Right ventricle myocardium inferior (tissue), 1 donor: ENCODE measurements at regions of chr5 and their contacts with region 1.

Region 1: DNA sequence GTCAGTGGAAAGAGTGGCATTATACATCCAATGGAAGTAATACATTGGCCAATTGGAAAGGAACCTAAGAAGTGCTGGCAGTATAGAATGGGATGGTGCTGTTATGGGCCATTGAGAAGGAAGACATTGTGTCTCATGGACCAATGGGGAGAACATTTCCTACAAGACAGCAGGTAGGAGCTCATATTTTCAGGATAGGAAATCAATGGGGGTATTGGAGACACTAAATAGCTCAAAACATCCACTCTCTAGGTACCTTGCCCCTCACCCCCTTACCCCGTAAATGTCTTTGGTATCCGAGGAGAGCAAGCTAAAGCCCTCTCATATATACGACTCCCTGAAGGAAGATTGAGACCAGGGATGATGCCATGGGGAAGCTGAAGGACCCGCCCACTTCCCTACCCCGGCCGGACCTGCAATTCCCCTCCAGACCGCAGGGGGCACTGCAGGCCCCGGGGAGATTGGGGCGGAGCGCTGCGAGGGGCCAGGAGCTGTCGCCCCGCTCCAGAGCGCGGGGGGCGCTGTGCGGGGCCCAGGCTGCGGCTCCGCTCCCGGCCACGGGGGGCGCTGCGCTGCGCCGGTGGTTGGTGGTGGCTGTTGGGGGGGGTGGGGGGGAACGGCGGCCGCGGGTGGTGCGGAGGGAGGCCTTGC is at the start of gene KDM3B:
- DNase-seq: peak; percentile 93
- ATAC-seq: peak; percentile 80
- total RNA-seq, gene KDM3B: 36.3 TPM

Region 2: GRCh38 chr5:138185957-138186447 is 166.2 kb before region 1 on chr5:
- intact Hi-C with region 1: no loop called
- DNase-seq: no peak
- ATAC-seq: no peak

Region 3: DNA sequence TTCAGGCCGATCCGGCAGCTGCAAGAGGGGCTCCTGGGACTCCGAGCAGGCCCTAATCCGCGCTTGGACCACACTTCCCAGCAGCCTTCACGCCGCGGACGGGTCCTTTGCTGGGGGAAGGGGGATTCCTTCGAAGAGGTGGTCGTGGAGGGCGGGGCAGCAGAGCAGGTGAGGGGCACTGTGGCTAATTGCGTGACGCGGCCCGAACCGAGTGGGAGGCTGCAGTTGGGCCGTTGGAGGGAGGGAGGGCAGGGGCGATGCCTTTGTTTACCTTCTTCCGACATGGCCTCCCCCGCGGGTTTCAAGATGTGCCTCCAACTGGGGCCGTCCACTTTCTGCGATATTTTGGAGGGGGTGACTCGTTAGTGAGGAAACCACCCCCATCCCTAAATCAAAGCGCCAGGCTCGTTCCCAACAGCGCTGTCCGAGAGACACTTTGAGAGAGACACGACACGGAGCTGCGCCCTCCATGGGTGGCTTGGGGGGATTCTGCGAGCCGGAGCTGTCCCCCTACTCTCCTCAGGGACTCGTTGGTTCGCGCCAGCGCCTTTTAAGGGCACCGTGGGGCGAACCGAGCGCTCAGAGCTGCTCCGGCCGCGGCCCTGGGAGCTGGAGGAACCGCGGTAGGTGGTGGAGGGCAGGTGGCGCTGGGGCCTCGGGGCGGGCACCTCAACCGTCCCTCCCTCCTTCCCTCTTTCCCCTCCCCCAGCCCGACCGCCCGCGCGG is 14.3 kb before region 1 on chr5 and contains the start of gene FAM53C:
- intact Hi-C with region 1: loop called (anchors 2 kb)
- DNase-seq: peak; percentile 96
- ATAC-seq: peak; percentile 95
- total RNA-seq, gene FAM53C: 30.8 TPM